Left ventricle myocardium superior (tissue), 1 donor: ENCODE measurements at regions of chr1 and their contacts with region 1.

Region 1: DNA sequence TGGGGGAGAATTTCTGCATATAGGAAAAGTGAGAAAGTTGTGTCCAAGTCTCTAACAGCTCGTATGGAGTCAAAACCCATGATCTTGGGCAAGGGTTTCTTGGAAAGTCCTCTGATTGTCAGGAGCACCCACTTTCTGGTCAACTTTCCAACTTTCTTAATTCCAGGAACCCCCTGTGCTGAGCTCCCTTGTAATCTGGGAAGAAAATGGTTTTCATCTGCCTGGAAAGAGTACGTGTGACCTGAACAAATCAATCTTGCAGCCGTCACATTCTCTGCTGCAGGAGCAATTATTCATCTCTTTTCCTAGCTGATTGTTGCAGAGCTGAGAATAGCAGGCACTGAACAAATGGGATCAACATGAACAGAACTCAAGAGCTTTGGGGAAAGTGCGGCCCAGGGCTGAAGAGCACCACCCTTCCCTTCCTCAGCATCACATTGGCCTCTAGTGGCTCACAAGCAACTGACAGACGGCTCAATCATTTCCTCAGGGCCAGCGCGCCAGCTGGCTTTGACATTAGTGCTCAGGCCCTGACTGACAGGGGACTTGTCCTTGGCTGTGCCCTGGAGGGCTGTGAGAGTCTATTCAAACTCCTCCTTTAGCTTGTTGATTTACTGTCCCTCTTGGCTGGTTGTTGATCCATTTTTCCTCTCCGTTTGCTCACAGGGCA is 295.2 kb downstream of the HLX start:
- DNase-seq: peak; percentile 84
- ATAC-seq: peak; percentile 100

Region 2: DNA sequence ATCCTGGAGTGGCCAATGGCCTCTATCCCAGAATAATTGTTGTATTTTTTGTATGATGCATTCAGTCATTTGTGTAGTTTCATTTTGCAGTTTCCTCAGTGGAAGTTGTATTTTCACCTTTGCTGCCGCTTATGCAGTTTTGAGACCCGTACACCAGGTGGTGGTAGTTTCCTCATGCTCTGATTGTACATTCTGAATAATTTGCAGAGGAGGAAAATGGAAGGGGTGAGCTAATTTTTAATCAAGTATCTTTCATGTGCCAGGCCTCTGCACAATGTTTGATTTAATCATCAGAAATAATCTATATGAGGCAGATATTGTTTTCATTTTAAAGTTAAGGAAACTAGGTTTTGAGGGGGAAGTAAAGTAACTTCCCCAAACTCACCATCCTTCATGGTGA is 265.7 kb before region 1 on chr1:
- intact Hi-C with region 1: loop called (anchors 10 kb)
- DNase-seq: no peak
- ATAC-seq: no peak

Region 3: DNA sequence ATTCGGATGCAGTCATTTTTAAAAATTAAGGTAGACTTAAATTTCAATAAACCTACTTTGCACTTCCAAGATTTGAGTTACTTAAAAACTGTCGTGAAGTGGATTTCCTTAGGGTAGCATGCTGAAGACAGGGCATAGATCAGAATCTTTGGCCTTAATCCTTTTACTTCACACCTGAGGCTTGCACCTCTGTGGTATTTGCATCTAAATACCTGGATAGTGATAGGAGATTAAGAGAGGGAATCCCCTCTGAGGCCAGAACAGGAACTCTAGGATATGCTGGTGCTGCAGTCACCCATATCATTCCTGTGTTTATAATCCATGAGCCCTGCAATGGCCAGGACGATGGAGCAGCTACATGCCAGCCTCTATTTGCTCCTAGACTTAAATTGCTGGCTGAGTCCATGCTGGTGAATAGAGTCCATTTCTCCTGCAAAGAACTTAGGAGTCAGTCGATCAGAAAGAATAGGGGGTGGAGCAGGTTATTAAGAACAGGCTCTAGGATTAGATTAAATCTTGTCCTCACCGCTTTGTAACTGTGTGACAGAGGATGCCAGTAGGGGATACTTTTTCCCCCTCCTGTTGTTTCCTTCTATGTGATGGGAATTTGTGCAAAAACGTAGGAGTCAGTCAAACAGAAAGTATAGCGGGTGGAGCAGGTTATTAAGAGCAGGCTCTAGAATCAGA is 233.8 kb after region 1 on chr1:
- intact Hi-C with region 1: no loop called
- DNase-seq: no peak
- ATAC-seq: no peak